Motor neuron (in vitro differentiated cells): ENCODE measurements at regions of chr1 and their contacts with region 1.

Region 1: DNA sequence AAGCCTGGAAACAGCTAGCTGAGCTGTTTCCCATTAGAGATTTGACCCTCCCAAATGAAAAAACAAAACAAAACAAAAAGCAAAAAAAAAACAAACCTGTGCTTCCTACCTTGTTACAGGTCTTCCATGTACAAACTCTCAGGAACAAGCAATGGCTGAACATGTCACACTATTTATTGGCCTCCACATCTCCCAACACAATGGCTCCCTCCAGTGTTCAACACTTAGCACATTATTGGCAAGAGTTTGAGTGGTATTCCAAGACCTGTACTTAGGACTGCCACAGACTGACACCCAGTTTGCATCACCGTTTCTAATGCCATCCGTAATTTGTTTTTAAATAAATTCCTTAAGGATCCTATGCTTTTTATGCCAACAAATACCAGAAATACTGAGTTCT is 195.0 kb upstream of the OLFM3 start:
- ATAC-seq: peak; percentile 46 to 90 (median 75)
- H3K4me3 ChIP-seq: no peak overlapping the region
- H3K27ac ChIP-seq: no peak overlapping the region
- H3K4me1 ChIP-seq: no peaks in the 10 kb centered on the region

Region 2: GRCh38 chr1:101846820-101847219 is 344.9 kb before region 1 on chr1:
- in situ Hi-C with region 1: loop called in 1 of 9 experiments (anchors 25 kb)
- ATAC-seq: peak in 1 of 8 experiments; percentile 26
- H3K4me3 ChIP-seq: no peak overlapping the region
- H3K27ac ChIP-seq: no peak overlapping the region
- H3K4me1 ChIP-seq: peaks cover 0 to 8% of the 10 kb centered on the region in 2 donors